GM12878 (cell line): ENCODE measurements at regions of chr2 and their contacts with region 1.

Region 1: DNA sequence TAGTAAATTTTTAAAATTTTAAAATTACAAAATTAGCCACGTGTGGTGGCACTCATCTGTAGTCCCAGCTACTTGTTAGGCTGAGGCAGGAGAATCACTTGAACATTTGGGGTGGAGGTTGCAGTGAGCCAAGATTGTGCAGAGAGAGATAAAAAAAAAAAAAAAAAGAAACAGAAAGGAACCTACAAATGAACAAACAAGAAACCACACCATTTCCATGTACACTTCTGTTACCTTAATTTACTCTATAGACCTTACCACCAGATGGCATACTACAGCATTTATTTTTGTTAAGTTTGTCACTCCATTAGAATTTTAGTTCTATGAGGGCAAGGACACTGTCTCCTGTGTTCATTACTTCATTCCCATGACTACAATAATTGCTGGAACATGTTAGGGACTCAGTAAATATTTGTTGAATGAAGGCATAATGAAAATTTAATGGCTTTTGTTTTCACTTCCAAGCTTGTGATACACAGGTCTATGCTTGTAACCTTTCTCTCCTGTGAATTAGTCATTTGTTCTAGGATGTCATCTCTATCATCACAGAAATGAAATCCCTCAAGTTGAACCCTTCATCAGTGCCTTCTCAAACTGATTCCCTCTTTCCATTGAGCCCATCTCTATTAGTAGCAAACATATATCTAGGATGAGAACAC is 76.0 kb downstream of the ARHGAP15 start:
- DNase-seq: no peak
- ATAC-seq: peak; percentile 81
- H3K4me3 ChIP-seq: no peak overlapping the region
- H3K27ac ChIP-seq: no peak overlapping the region
- H3K4me1 ChIP-seq: no peaks in the 10 kb centered on the region
- H3K27me3 ChIP-seq: no peaks in the 10 kb centered on the region
- CTCF ChIP-seq: peak in 1 of 3 experiments; percentile 43; a peak in 3 of 6 replicates
- EP300 ChIP-seq: no peak
- POLR2A ChIP-seq: no peak
- RAD21 ChIP-seq: 0 out of 2 replicates have a peak, but pooled peaks have one; percentile 3

Region 2: GRCh38 chr2:143193121-143193520 is 12.1 kb before region 1 on chr2:
- CTCF ChIA-PET with region 1: interaction called, 14 read pairs
- POLR2A ChIA-PET with region 1: no interaction called
- RAD21 ChIA-PET with region 1: interaction called, 5 read pairs
- SMC1A ChIA-PET with region 1: interaction called, 3 read pairs
- in situ Hi-C with region 1: no loop called
- intact Hi-C with region 1: no loop called
- DNase-seq: no peak
- ATAC-seq: no peak
- H3K4me3 ChIP-seq: no peak overlapping the region
- H3K27ac ChIP-seq: no peak overlapping the region
- H3K4me1 ChIP-seq: no peaks in the 10 kb centered on the region
- H3K27me3 ChIP-seq: no peaks in the 10 kb centered on the region
- CTCF ChIP-seq: no peak
- EP300 ChIP-seq: no peak
- POLR2A ChIP-seq: no peak
- RAD21 ChIP-seq: no peak

Region 3: DNA sequence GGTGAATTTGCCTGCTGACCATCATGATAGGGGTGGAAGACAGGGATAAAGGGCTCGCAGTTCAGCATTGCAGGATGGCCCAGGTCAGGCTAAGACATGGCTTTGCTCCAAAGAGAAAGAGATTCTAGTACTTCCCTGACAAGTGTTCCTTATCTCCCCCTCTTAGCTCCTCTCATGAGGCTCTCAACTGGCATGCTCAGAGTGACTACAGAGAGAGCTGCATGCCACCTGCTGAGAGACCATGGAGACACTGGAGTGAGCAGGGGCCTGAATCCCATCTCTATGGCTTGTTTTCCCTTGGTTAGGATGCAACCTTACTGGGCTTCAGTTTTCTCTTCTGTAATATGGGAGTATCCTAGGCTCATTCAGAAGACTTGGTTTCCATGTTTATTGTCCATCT is 18.3 kb after region 1 on chr2:
- CTCF ChIA-PET with region 1: interaction called, 19 read pairs
- POLR2A ChIA-PET with region 1: no interaction called
- RAD21 ChIA-PET with region 1: interaction called, 3 read pairs
- SMC1A ChIA-PET with region 1: interaction called, 21 read pairs
- in situ Hi-C with region 1: no loop called
- intact Hi-C with region 1: no loop called
- DNase-seq: no peak
- ATAC-seq: no peak
- H3K4me3 ChIP-seq: no peak overlapping the region
- H3K27ac ChIP-seq: no peak overlapping the region
- H3K4me1 ChIP-seq: no peaks in the 10 kb centered on the region
- H3K27me3 ChIP-seq: no peaks in the 10 kb centered on the region
- CTCF ChIP-seq: no peak
- EP300 ChIP-seq: no peak
- POLR2A ChIP-seq: no peak
- RAD21 ChIP-seq: no peak

Region 4: DNA sequence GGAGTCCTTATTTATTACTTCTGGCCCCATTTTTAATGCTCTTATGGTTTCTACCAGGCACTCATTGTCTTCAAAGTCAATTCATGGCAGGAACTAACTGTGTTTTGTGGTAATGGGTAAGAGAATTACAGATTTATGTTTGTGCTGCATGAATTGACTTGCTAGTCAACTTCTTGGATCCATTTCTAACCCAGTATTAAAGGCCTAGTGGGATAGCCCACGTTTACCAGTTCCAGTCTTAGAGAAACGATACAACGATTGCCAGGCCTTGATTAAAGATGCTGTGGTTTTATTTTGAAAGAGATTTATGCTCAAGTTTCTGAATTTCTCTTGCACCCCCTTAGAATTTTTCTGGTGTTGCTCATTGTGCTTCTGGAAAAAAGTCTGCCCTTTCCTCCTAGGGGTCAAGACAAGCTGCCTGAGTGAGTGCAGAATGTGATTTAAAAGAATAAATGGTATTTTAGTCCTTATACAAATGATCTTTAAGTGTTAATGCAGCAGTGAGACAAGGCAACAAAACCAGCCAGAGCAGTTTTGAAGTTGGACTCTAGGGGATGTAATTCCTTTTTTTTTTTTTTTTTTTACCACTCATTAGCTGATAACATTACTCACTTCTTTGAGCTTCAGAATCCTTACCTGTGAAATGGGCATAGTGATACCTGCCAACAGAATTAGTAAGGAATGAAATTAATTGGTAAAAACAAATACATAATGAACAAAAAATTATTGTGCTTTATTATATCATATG is 25.4 kb after region 1 on chr2:
- CTCF ChIA-PET with region 1: interaction called, 16 read pairs
- POLR2A ChIA-PET with region 1: no interaction called
- RAD21 ChIA-PET with region 1: no interaction called
- SMC1A ChIA-PET with region 1: no interaction called
- in situ Hi-C with region 1: no loop called
- intact Hi-C with region 1: no loop called
- DNase-seq: no peak
- ATAC-seq: no peak
- H3K4me3 ChIP-seq: no peak overlapping the region
- H3K27ac ChIP-seq: no peak overlapping the region
- H3K4me1 ChIP-seq: no peaks in the 10 kb centered on the region
- H3K27me3 ChIP-seq: no peaks in the 10 kb centered on the region
- CTCF ChIP-seq: no peak
- EP300 ChIP-seq: no peak
- POLR2A ChIP-seq: no peak
- RAD21 ChIP-seq: no peak

Region 5: GRCh38 chr2:143433251-143433650 is 228.0 kb after region 1 on chr2:
- CTCF ChIA-PET with region 1: no interaction called
- POLR2A ChIA-PET with region 1: no interaction called
- RAD21 ChIA-PET with region 1: no interaction called
- SMC1A ChIA-PET with region 1: no interaction called
- in situ Hi-C with region 1: no loop called
- intact Hi-C with region 1: no loop called
- DNase-seq: no peak
- ATAC-seq: no peak
- H3K4me3 ChIP-seq: no peak overlapping the region
- H3K27ac ChIP-seq: no peak overlapping the region
- H3K4me1 ChIP-seq: no peaks in the 10 kb centered on the region
- H3K27me3 ChIP-seq: no peaks in the 10 kb centered on the region
- CTCF ChIP-seq: no peak
- EP300 ChIP-seq: no peak
- POLR2A ChIP-seq: no peak
- RAD21 ChIP-seq: no peak